ENCODE measurements at regions of chr10 and their contacts with region 1.

Region 1: GRCh38 chr10:93376372-93377293 is 105.5 kb downstream of the MYOF start:
- DNase-seq: no peak
- ATAC-seq: peak; percentile 90
- H3K4me3 Mint-ChIP-seq: no peak overlapping the region
- H3K27ac Mint-ChIP-seq: no peak overlapping the region
- H3K4me1 Mint-ChIP-seq: peaks cover 4% of the 10 kb centered on the region; the same call in 1 of the 2 replicates
- H3K27me3 Mint-ChIP-seq: no peaks in the 10 kb centered on the region
- CTCF ChIP-seq: peak; percentile 93

Region 2: GRCh38 chr10:93363891-93364648 is 12.6 kb before region 1 on chr10:
- CTCF ChIA-PET with region 1: interaction called, 16 read pairs
- POLR2A ChIA-PET with region 1: no interaction called
- DNase-seq: no peak
- ATAC-seq: 0 out of 2 replicates have a peak, but pooled peaks have one; percentile 24
- H3K4me3 Mint-ChIP-seq: no peak overlapping the region
- H3K27ac Mint-ChIP-seq: no peak overlapping the region
- H3K4me1 Mint-ChIP-seq: peaks cover 12% of the 10 kb centered on the region
- H3K27me3 Mint-ChIP-seq: no peaks in the 10 kb centered on the region
- CTCF ChIP-seq: no peak

Region 3: GRCh38 chr10:93408783-93409182 is 32.1 kb after region 1 on chr10:
- CTCF ChIA-PET with region 1: interaction called, 10 read pairs
- POLR2A ChIA-PET with region 1: no interaction called
- DNase-seq: no peak
- ATAC-seq: peak; percentile 43
- H3K4me3 Mint-ChIP-seq: no peak overlapping the region
- H3K27ac Mint-ChIP-seq: no peak overlapping the region
- H3K4me1 Mint-ChIP-seq: peaks cover 13% of the 10 kb centered on the region
- H3K27me3 Mint-ChIP-seq: no peaks in the 10 kb centered on the region; the same call in 1 of the 2 replicates
- CTCF ChIP-seq: no peak

Region 4: GRCh38 chr10:93425861-93426260 is 49.2 kb after region 1 on chr10:
- CTCF ChIA-PET with region 1: interaction called, 10 read pairs
- POLR2A ChIA-PET with region 1: no interaction called
- DNase-seq: no peak
- ATAC-seq: no peak
- H3K4me3 Mint-ChIP-seq: no peak overlapping the region
- H3K27ac Mint-ChIP-seq: no peak overlapping the region; the same call in 1 of the 2 replicates
- H3K4me1 Mint-ChIP-seq: peaks cover 16% of the 10 kb centered on the region
- H3K27me3 Mint-ChIP-seq: no peaks in the 10 kb centered on the region
- CTCF ChIP-seq: no peak

Region 5: DNA sequence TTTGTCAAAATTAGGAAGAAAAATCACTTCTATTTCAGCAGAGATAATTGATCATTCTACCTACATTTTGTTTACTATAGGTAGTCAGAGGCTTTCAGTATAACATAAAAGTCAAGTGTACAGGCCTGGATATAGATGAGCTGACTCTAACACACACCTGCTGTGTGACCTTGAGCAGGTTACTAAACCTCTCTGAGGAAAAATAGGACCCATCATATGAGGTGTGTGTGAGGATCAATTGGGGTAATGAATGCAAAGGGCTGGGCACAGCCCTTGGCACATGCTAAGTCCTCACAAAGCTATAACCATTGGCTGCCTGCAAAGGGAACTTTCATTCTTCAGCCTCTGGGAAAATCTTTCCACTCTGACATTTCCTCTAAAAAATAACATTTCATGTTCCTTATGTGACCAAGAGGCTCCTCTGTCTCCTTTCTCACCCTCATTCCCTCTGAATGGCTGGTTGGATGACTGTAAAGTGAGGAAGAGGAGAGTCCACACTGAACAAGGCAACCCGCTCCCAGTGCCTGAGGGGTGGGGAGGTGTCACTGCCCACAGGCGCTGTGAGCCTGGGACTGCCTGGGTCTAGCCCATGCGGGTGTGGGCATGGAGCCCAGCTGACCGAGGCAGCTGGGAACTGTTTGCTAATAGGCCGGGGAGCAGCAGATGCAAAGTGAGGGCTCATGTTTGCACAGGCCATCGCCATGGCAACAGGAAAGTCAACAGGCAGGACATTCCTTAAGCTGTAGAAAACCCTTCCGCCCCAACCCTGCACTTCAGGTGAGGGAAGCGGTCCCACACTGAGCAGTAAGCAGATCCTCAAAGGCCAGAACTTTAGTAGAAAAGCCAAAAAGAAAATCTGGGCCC is 68.7 kb after region 1 on chr10:
- CTCF ChIA-PET with region 1: interaction called, 15 read pairs
- POLR2A ChIA-PET with region 1: interaction called, 3 read pairs
- DNase-seq: peak; percentile 96
- ATAC-seq: peak; percentile 99
- H3K4me3 Mint-ChIP-seq: peak overlapping the region; percentile 27; the same call in 1 of the 2 replicates
- H3K27ac Mint-ChIP-seq: peak overlapping the region; percentile 99
- H3K4me1 Mint-ChIP-seq: peaks cover 56% of the 10 kb centered on the region
- H3K27me3 Mint-ChIP-seq: no peaks in the 10 kb centered on the region
- CTCF ChIP-seq: no peak

Region 6: GRCh38 chr10:93488956-93489528 is 112.4 kb after region 1 on chr10:
- CTCF ChIA-PET with region 1: interaction called, 311 read pairs
- POLR2A ChIA-PET with region 1: interaction called, 3 read pairs
- DNase-seq: no peak
- ATAC-seq: no peak; the same call in 1 of the 2 replicates
- H3K4me3 Mint-ChIP-seq: no peak overlapping the region
- H3K27ac Mint-ChIP-seq: no peak overlapping the region
- H3K4me1 Mint-ChIP-seq: no peaks in the 10 kb centered on the region; the same call in 1 of the 2 replicates
- H3K27me3 Mint-ChIP-seq: peaks cover 4% of the 10 kb centered on the region; the same call in 1 of the 2 replicates
- CTCF ChIP-seq: no peak

Region 7: DNA sequence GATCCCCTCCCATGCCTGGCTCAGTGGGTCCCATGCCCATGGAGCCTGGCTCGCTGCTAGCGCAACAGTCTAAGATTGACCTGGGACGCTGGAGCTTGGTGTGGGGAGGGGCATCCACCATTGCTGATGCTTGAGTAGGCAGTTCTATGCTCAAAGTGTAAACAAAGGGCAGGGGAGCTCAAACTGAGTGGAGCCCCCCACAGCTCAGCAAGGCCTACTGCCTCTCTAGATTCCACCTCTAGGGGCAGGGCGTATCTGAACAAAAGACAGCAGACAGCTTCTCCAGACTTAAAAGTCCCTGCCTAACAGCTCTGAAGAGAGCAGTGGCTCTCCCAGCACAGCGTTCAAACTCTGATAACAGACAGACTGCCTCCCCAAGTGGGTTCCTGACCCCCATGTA is 158.7 kb after region 1 on chr10:
- CTCF ChIA-PET with region 1: interaction called, 12 read pairs
- POLR2A ChIA-PET with region 1: no interaction called
- DNase-seq: peak; percentile 44
- ATAC-seq: peak; percentile 85
- H3K4me3 Mint-ChIP-seq: no peak overlapping the region
- H3K27ac Mint-ChIP-seq: no peak overlapping the region
- H3K4me1 Mint-ChIP-seq: 0 out of 2 replicates have a peak, but pooled peaks cover 2% of the 10 kb centered on the region
- H3K27me3 Mint-ChIP-seq: peaks cover 33% of the 10 kb centered on the region
- CTCF ChIP-seq: no peak